PC-9 (cell line): ENCODE measurements at regions of chr4 and their contacts with region 1.

Region 1: GRCh38 chr4:173505924-173506518 is 24.0 kb downstream of the HAND2 start:
- DNase-seq: peak in 1 of 2 experiments; percentile 17
- H3K4me3 ChIP-seq: no peak overlapping the region
- H3K27ac ChIP-seq: no peak overlapping the region
- H3K4me1 ChIP-seq: no peaks in the 10 kb centered on the region
- H3K27me3 ChIP-seq: no peaks in the 10 kb centered on the region
- CTCF ChIP-seq: peak; percentile 69

Region 2: DNA sequence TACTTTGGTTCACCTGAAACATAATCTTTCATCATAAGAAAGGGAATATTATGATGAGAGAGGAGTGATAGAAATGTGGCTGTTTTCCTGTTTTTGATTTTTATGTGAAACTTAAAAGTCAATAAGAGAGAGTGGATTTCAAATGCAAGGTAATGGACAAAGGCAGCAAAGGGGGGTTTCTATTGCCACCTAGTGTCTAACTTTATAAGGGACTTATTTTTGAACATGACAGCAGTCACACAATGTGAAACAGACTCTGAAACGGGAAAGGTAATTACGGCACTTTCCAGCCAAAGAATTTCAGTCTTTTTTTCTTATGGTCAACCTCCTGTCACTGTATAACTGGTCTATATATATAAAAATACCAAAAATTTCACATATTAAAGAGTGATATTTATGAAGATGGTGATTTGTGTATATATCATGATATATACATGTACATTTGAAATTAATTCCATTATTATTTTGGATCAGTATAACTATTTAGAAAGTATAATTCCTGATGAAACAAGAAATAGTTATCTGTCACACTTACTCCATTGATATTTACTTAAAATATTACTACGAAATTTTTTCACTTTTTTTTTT is 650.3 kb after region 1 on chr4:
- CTCF ChIA-PET with region 1: no interaction called
- POLR2A ChIA-PET with region 1: no interaction called
- intact Hi-C with region 1: loop called (anchors 10 kb)
- DNase-seq: no peak
- H3K4me3 ChIP-seq: no peak overlapping the region
- H3K27ac ChIP-seq: no peak overlapping the region
- H3K4me1 ChIP-seq: no peaks in the 10 kb centered on the region
- H3K27me3 ChIP-seq: no peaks in the 10 kb centered on the region
- CTCF ChIP-seq: peak; percentile 66